ENCODE measurements at regions of chr2 and their contacts with region 1.

Region 1: GRCh38 chr2:233281992-233282603 is 25.5 kb upstream of the SAG start:
- DNase-seq: no peak
- H3K4me3 ChIP-seq: no peak overlapping the region
- H3K27ac ChIP-seq: no peak overlapping the region
- H3K4me1 ChIP-seq: no peaks in the 10 kb centered on the region
- H3K27me3 ChIP-seq: no peaks in the 10 kb centered on the region
- CTCF ChIP-seq: no peak
- POLR2A ChIP-seq: no peak

Region 2: DNA sequence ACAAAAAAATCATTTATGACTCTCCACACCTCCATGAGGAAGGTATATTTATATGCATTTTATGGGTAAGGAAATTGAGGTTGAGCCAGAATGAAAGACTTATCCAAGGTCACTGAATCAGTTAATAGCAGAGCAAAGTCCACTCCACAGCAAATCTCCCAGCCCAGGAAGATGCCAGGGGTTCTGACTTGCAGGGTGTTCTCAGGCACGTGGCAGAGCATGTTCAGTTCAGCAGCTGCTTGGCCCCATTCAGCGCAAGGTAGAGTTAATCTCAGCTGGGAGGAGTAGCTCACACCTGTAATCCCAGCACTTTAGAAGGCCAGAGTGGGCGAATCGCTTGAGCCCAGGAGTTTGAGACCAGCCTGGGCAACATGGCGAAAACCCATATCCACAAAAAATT is 54.4 kb after region 1 on chr2:
- intact Hi-C with region 1: loop called (anchors 2 kb)
- DNase-seq: no peak
- H3K4me3 ChIP-seq: no peak overlapping the region
- H3K27ac ChIP-seq: no peak overlapping the region
- H3K4me1 ChIP-seq: no peaks in the 10 kb centered on the region
- H3K27me3 ChIP-seq: no peaks in the 10 kb centered on the region
- CTCF ChIP-seq: no peak
- POLR2A ChIP-seq: no peak

Measured in vagina (tissue), 2 donors.